ENCODE measurements at regions of chr3 and their contacts with region 1.

Region 1: GRCh38 chr3:134794950-134795745 is at the start of gene EPHB1:
- DNase-seq: peak in 7 of 9 donors; percentile 5 to 76 (median 14)
- ATAC-seq: peak; percentile 71
- H3K4me3 ChIP-seq: peak within 1 kb of the TSS; percentile 20
- H3K4me3 Mint-ChIP-seq: peak within 1 kb of the TSS; percentile 73 to 98 (median 82)
- H3K27ac ChIP-seq: no peak within 1 kb of the TSS
- H3K27ac Mint-ChIP-seq: peak within 1 kb of the TSS in 1 of 9 donors; percentile 53
- H3K4me1 ChIP-seq: no peaks in the 10 kb centered on the region
- H3K4me1 Mint-ChIP-seq: peaks cover 4 to 18% (median 10%) of the 10 kb centered on the region in 7 donors
- H3K27me3 ChIP-seq: no peaks in the 10 kb centered on the region
- H3K27me3 Mint-ChIP-seq: peaks cover 46 to 76% (median 51%) of the 10 kb centered on the region in 5 donors
- total RNA-seq, gene EPHB1: 1.6 to 2.2 (median 1.8) TPM in 3 of 5 experiments, not detected in the others

Region 2: GRCh38 chr3:134552784-134553183 is 242.4 kb before region 1 on chr3:
- CTCF ChIA-PET with region 1: no interaction called
- POLR2A ChIA-PET with region 1: no interaction called
- intact Hi-C with region 1: no loop called
- DNase-seq: no peak
- ATAC-seq: no peak
- H3K4me3 ChIP-seq: no peak overlapping the region
- H3K4me3 Mint-ChIP-seq: no peak overlapping the region
- H3K27ac ChIP-seq: no peak overlapping the region
- H3K27ac Mint-ChIP-seq: no peak overlapping the region
- H3K4me1 ChIP-seq: no peaks in the 10 kb centered on the region
- H3K4me1 Mint-ChIP-seq: no peaks in the 10 kb centered on the region
- H3K27me3 ChIP-seq: no peaks in the 10 kb centered on the region
- H3K27me3 Mint-ChIP-seq: no peaks in the 10 kb centered on the region

Region 3: DNA sequence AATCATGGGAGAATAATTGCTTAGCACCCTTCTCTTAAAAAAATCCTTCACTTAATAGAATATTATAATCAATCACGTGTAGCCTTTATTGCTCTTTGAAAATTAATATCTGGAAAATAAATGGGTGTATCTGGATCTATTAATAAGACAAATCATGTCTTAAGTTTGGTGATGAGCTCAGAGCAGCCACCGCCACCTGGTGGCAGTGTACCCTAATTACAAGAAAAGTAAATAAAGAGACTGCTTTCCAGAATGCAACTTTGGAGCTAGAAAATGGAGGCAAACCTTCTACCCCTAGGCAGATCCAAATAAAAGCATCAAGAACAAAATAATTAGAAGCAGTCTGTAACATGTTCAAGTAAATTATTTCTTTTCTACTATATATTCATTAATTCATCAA is 43.5 kb after region 1 on chr3:
- CTCF ChIA-PET with region 1: no interaction called
- POLR2A ChIA-PET with region 1: no interaction called
- intact Hi-C with region 1: loop called in 1 of 2 experiments (anchors 1 kb)
- DNase-seq: no peak
- ATAC-seq: no peak
- H3K4me3 ChIP-seq: no peak overlapping the region
- H3K4me3 Mint-ChIP-seq: no peak overlapping the region
- H3K27ac ChIP-seq: no peak overlapping the region
- H3K27ac Mint-ChIP-seq: no peak overlapping the region
- H3K4me1 ChIP-seq: no peaks in the 10 kb centered on the region
- H3K4me1 Mint-ChIP-seq: no peaks in the 10 kb centered on the region
- H3K27me3 ChIP-seq: no peaks in the 10 kb centered on the region
- H3K27me3 Mint-ChIP-seq: peaks cover 0 to 15% (median 4%) of the 10 kb centered on the region in 5 donors

Region 4: GRCh38 chr3:134978658-134979057 is 183.5 kb after region 1 on chr3:
- CTCF ChIA-PET with region 1: no interaction called
- POLR2A ChIA-PET with region 1: no interaction called
- intact Hi-C with region 1: loop called in 1 of 2 experiments (anchors 1 kb)
- DNase-seq: no peak
- ATAC-seq: no peak
- H3K4me3 ChIP-seq: no peak overlapping the region
- H3K4me3 Mint-ChIP-seq: no peak overlapping the region
- H3K27ac ChIP-seq: no peak overlapping the region
- H3K27ac Mint-ChIP-seq: no peak overlapping the region
- H3K4me1 ChIP-seq: no peaks in the 10 kb centered on the region
- H3K4me1 Mint-ChIP-seq: peaks cover 0 to 2% (median 0%) of the 10 kb centered on the region in 7 donors
- H3K27me3 ChIP-seq: no peaks in the 10 kb centered on the region
- H3K27me3 Mint-ChIP-seq: peaks cover 0 to 26% (median 4%) of the 10 kb centered on the region in 5 donors

Region 5: DNA sequence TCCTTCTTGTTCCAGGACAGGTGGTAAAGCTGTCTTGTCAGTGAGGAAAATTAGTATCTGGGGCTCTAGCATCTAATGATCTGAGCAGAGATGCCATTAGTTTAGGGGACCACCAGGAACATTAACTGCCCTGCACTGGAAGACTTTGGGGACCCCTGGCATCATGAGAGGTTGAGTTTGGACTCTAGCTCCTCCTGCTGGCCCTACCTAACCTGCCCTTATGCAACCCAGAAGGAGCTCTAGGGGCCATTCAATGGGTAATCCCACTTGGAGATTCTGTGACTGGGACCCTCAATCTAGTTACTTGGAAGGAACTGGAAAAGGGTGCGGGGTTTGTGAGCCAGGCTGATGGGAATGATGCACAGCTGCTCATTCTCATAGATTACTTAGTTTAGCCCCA is 450.9 kb after region 1 on chr3:
- CTCF ChIA-PET with region 1: no interaction called
- POLR2A ChIA-PET with region 1: no interaction called
- intact Hi-C with region 1: loop called in 1 of 2 experiments (anchors 5 kb)
- DNase-seq: no peak
- ATAC-seq: no peak
- H3K4me3 ChIP-seq: no peak overlapping the region
- H3K4me3 Mint-ChIP-seq: no peak overlapping the region
- H3K27ac ChIP-seq: no peak overlapping the region
- H3K27ac Mint-ChIP-seq: no peak overlapping the region
- H3K4me1 ChIP-seq: no peaks in the 10 kb centered on the region
- H3K4me1 Mint-ChIP-seq: no peaks in the 10 kb centered on the region
- H3K27me3 ChIP-seq: no peaks in the 10 kb centered on the region
- H3K27me3 Mint-ChIP-seq: peaks cover 0 to 5% (median 0%) of the 10 kb centered on the region in 5 donors

Region 6: DNA sequence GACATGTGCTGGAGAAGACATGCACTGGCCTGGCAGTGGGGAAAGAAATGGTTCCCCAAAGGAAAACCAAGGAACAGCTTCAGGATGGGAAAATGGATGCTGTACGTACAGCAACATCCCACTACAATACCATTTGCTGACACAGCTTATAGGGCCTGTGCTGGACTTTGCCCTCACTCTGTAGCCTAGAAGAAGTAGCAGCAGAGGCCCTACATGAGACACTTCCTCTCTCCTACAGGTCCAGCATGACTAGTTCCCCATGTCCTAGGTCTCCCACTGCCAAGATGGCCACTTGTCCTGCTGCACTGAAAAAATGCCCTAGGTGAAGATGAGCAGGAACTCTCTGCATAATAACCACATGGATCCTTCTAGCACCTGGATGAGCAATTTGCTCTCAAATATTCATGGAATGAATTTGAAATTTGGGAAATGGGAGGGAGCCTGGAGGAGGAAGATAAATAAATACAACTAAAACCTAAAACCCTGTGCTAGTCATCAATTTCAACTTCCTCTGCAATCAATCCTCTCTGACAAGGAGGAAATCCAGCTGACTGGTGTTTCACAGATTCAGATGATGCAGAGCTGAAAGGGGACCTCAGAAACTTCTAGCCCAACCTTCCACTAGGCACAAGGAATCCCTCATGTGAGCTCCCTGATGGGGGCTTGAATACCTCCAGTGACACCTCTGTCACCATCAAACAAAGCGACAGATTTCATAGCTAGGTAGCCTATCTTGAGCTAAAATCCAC is 656.1 kb after region 1 on chr3:
- CTCF ChIA-PET with region 1: no interaction called
- POLR2A ChIA-PET with region 1: no interaction called
- intact Hi-C with region 1: no loop called
- DNase-seq: no peak
- ATAC-seq: no peak
- H3K4me3 ChIP-seq: no peak overlapping the region
- H3K4me3 Mint-ChIP-seq: no peak overlapping the region
- H3K27ac ChIP-seq: no peak overlapping the region
- H3K27ac Mint-ChIP-seq: no peak overlapping the region
- H3K4me1 ChIP-seq: no peaks in the 10 kb centered on the region
- H3K4me1 Mint-ChIP-seq: no peaks in the 10 kb centered on the region
- H3K27me3 ChIP-seq: no peaks in the 10 kb centered on the region
- H3K27me3 Mint-ChIP-seq: no peaks in the 10 kb centered on the region

Region 7: GRCh38 chr3:135895106-135895733 is 1100.1 kb after region 1 on chr3:
- CTCF ChIA-PET with region 1: no interaction called
- POLR2A ChIA-PET with region 1: no interaction called
- intact Hi-C with region 1: loop called (anchors 1 to 10 kb)
- DNase-seq: peak in 4 of 9 donors; percentile 2 to 26 (median 8)
- ATAC-seq: no peak
- H3K4me3 ChIP-seq: no peak overlapping the region
- H3K4me3 Mint-ChIP-seq: no peak overlapping the region
- H3K27ac ChIP-seq: no peak overlapping the region
- H3K27ac Mint-ChIP-seq: no peak overlapping the region
- H3K4me1 ChIP-seq: no peaks in the 10 kb centered on the region
- H3K4me1 Mint-ChIP-seq: no peaks in the 10 kb centered on the region
- H3K27me3 ChIP-seq: no peaks in the 10 kb centered on the region
- H3K27me3 Mint-ChIP-seq: peaks cover 0 to 21% (median 5%) of the 10 kb centered on the region in 5 donors